ENCODE measurements at regions of chr13 and their contacts with region 1.

Region 1: GRCh38 chr13:44484562-44485138 is 91.5 kb downstream of the TSC22D1 start:
- DNase-seq: no peak
- ATAC-seq: peak; percentile 43; the same call in 1 of the 3 replicates
- H3K4me3 ChIP-seq: 0 out of 2 replicates have a peak overlapping the region, but pooled peaks have one; percentile 21
- H3K27ac ChIP-seq: peak overlapping the region; percentile 52
- H3K4me1 ChIP-seq: peaks cover 7% of the 10 kb centered on the region
- H3K27me3 ChIP-seq: no peaks in the 10 kb centered on the region
- CTCF ChIP-seq: no peak
- EP300 ChIP-seq: no peak
- POLR2A ChIP-seq: no peak
- RAD21 ChIP-seq: no peak

Region 2: GRCh38 chr13:44470638-44471562 is 13.8 kb before region 1 on chr13:
- CTCF ChIA-PET with region 1: interaction called, 29 read pairs
- POLR2A ChIA-PET with region 1: no interaction called
- RAD21 ChIA-PET with region 1: interaction called, 4 read pairs
- SMC1A ChIA-PET with region 1: interaction called, 7 read pairs
- in situ Hi-C with region 1: no loop called
- intact Hi-C with region 1: no loop called
- DNase-seq: no peak
- ATAC-seq: no peak
- H3K4me3 ChIP-seq: no peak overlapping the region
- H3K27ac ChIP-seq: no peak overlapping the region
- H3K4me1 ChIP-seq: no peaks in the 10 kb centered on the region
- H3K27me3 ChIP-seq: no peaks in the 10 kb centered on the region
- CTCF ChIP-seq: peak; percentile 11 to 41 (median 34); a peak in 2 of 6 replicates
- EP300 ChIP-seq: no peak
- POLR2A ChIP-seq: no peak
- RAD21 ChIP-seq: peak; percentile 53

Region 3: GRCh38 chr13:44870456-44870929 is 385.8 kb after region 1 on chr13:
- CTCF ChIA-PET with region 1: interaction called, 5 read pairs
- POLR2A ChIA-PET with region 1: no interaction called
- RAD21 ChIA-PET with region 1: no interaction called
- SMC1A ChIA-PET with region 1: interaction called, 3 read pairs
- in situ Hi-C with region 1: loop called (anchors 5 kb)
- intact Hi-C with region 1: no loop called
- DNase-seq: no peak
- ATAC-seq: no peak
- H3K4me3 ChIP-seq: no peak overlapping the region
- H3K27ac ChIP-seq: no peak overlapping the region
- H3K4me1 ChIP-seq: peaks cover 7% of the 10 kb centered on the region
- H3K27me3 ChIP-seq: no peaks in the 10 kb centered on the region; a peak in 1 of 4 replicates
- CTCF ChIP-seq: no peak
- EP300 ChIP-seq: no peak
- POLR2A ChIP-seq: no peak
- RAD21 ChIP-seq: no peak

Region 4: GRCh38 chr13:44894001-44894780 is 409.5 kb after region 1 on chr13:
- CTCF ChIA-PET with region 1: interaction called, 13 read pairs
- POLR2A ChIA-PET with region 1: no interaction called
- RAD21 ChIA-PET with region 1: no interaction called
- SMC1A ChIA-PET with region 1: no interaction called
- in situ Hi-C with region 1: no loop called
- intact Hi-C with region 1: no loop called
- DNase-seq: no peak
- ATAC-seq: no peak
- H3K4me3 ChIP-seq: no peak overlapping the region
- H3K27ac ChIP-seq: no peak overlapping the region
- H3K4me1 ChIP-seq: no peaks in the 10 kb centered on the region
- H3K27me3 ChIP-seq: no peaks in the 10 kb centered on the region
- CTCF ChIP-seq: no peak
- EP300 ChIP-seq: no peak
- POLR2A ChIP-seq: no peak
- RAD21 ChIP-seq: no peak

Region 5: GRCh38 chr13:45310341-45311125 is 825.9 kb after region 1 on chr13:
- CTCF ChIA-PET with region 1: interaction called, 5 read pairs
- POLR2A ChIA-PET with region 1: no interaction called
- RAD21 ChIA-PET with region 1: no interaction called
- SMC1A ChIA-PET with region 1: no interaction called
- in situ Hi-C with region 1: loop called (anchors 25 kb)
- intact Hi-C with region 1: loop called (anchors 5 kb)
- DNase-seq: no peak
- ATAC-seq: peak; percentile 48; the same call in 2 of the 3 replicates
- H3K4me3 ChIP-seq: peak overlapping the region; percentile 32; the same call in 1 of the 2 replicates
- H3K27ac ChIP-seq: no peak overlapping the region
- H3K4me1 ChIP-seq: peaks cover 3% of the 10 kb centered on the region
- H3K27me3 ChIP-seq: no peaks in the 10 kb centered on the region; a peak in 1 of 4 replicates
- CTCF ChIP-seq: no peak
- EP300 ChIP-seq: no peak
- POLR2A ChIP-seq: no peak
- RAD21 ChIP-seq: no peak

Measured in GM12878 (cell line).